Dorsolateral prefrontal cortex (tissue), 120 donors: ENCODE measurements at regions of chr14 and their contacts with region 1.

Region 1: DNA sequence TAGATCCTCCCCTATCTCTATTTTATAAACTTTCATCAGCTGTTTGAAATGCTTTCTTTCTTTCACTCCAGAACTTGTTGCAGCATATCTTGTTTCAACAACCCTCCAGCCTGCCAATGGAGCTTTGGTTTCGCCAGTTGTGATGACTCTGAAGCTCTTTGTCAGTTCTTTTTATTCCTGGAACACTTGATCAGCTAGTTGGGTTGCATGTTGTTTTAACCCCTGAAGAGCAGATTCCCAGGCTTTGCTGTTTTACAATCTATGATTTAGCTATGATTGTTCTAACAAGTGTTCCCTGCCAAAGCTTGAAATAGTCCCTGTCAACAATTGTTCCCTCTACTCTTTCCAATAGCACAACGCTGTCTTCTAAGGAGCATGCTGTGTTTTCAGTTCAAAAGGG is 50.6 kb upstream of the FUT8 start:
- DNase-seq: peak in 3 of 10 donors; percentile 42 to 69 (median 61)
- H3K4me3 ChIP-seq: peak overlapping the region in 8 of 59 donors; percentile 7 to 39 (median 12)
- H3K27ac ChIP-seq: peak overlapping the region in 58 of 59 donors; percentile 41 to 96 (median 84)
- H3K27me3 ChIP-seq: no peaks in the 10 kb centered on the region
- CTCF ChIP-seq: peak in 2 of 56 donors; percentile 13 to 15

Region 2: GRCh38 chr14:65229751-65230749 is 131.9 kb before region 1 on chr14:
- intact Hi-C with region 1: loop called in 1 of 2 experiments (anchors 5 kb)
- DNase-seq: peak in 9 of 10 donors; percentile 52 to 94 (median 80)
- H3K4me3 ChIP-seq: peak overlapping the region in 57 of 59 donors; percentile 5 to 63 (median 42)
- H3K27ac ChIP-seq: peak overlapping the region; percentile 93 to 100 (median 98)
- H3K27me3 ChIP-seq: no peaks in the 10 kb centered on the region
- CTCF ChIP-seq: peak in 2 of 56 donors; percentile 12 to 20

Region 3: GRCh38 chr14:65287264-65288131 is 74.4 kb before region 1 on chr14:
- intact Hi-C with region 1: loop called (anchors 2 to 5 kb)
- DNase-seq: no peak
- H3K4me3 ChIP-seq: no peak overlapping the region
- H3K27ac ChIP-seq: peak overlapping the region in 30 of 59 donors; percentile 10 to 100 (median 97)
- H3K27me3 ChIP-seq: no peaks in the 10 kb centered on the region
- CTCF ChIP-seq: no peak